Activated T-helper 2 cell treated with anti-CD3 and anti-CD28 coated beads, Interferon-gamma antibody, Interleukin-2, Interleukin-4, amounts not matched to agents 10 μg/mL and 5 μg/mL and 100 μg/mL, durations not matched to agents 14 hours and 24 hours and 36 hours (primary cell): ENCODE measurements at regions of chr10 and their contacts with region 1.

Region 1: GRCh38 chr10:9018195-9019173 is 964.0 kb downstream of the GATA3 start:
- DNase-seq: no peak
- H3K4me3 Mint-ChIP-seq: peak overlapping the region; percentile 80
- H3K27ac Mint-ChIP-seq: peak overlapping the region; percentile 94
- H3K4me1 Mint-ChIP-seq: peaks cover 72% of the 10 kb centered on the region
- H3K27me3 Mint-ChIP-seq: no peaks in the 10 kb centered on the region

Region 2: DNA sequence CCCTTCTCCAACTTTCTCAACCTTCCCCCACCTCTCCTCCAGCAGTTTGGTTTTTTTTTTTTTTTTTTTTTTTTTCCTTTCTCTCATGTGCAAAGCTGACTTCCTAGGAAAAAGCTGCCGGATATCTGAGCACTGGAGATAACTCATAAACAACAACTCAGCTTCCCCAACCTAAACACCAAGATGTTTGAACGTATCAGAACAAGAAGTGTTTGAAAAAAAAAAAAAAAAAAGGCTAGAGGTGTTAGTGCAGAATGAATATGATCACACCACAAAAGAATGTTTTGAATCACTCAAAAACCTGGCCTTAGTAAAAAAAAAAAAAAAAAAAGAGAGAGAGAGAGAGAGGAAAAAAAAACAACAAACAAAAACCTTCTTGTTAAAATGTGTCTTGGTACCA is 952.8 kb before region 1 on chr10:
- intact Hi-C with region 1: loop called (anchors 5 kb)
- DNase-seq: no peak
- H3K4me3 Mint-ChIP-seq: peak overlapping the region; percentile 92
- H3K27ac Mint-ChIP-seq: peak overlapping the region; percentile 94
- H3K4me1 Mint-ChIP-seq: peaks cover 87% of the 10 kb centered on the region
- H3K27me3 Mint-ChIP-seq: no peaks in the 10 kb centered on the region

Region 3: GRCh38 chr10:9688711-9689110 is 670.2 kb after region 1 on chr10:
- intact Hi-C with region 1: no loop called
- DNase-seq: no peak
- H3K4me3 Mint-ChIP-seq: no peak overlapping the region
- H3K27ac Mint-ChIP-seq: no peak overlapping the region
- H3K4me1 Mint-ChIP-seq: no peaks in the 10 kb centered on the region
- H3K27me3 Mint-ChIP-seq: no peaks in the 10 kb centered on the region